MCF 10A (cell line): ENCODE measurements at regions of chr1 and their contacts with region 1.

Region 1: DNA sequence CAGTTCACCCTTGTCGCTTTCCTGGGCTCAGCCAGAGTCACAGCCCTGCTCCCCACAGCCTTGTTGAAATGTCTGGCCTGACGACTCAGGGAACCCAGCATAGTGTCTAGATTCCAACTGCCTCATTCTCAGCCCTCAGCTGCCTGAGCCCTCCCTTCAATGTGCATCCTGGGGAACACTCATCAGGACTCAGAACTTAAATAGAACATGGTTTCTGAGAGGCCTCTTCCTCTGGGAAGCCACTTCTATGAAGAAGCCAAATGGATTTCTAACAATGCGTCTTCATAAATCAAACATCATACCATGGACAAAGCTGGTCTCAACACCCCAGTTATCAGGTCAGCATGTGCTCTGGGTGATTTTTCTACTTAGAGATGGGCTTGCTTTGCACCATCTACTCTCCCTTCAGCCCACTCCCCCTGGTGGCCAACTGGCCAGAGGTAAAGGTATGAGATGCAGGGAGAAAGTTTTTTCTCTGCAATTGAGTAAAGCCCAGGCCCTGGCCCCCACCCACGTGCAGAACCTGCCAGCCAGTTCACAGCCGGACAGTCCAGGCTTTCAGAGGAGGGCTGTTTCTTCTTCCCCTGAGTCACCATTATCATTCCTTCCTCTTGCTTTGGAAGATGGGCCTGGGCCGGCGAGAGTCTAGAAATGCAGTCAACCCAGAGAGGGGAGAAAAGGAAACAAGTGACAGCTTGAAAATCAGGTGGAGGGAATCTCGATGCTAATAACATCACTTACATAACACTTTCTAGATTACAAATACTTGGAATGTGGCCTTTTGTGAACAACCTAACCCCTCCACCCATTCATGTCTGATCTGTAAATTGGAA is 32.1 kb downstream of the CD244 start:
- DNase-seq: peak; percentile 85
- H3K4me3 Mint-ChIP-seq: no peak overlapping the region
- H3K27ac Mint-ChIP-seq: no peak overlapping the region
- H3K4me1 Mint-ChIP-seq: peaks cover 23% of the 10 kb centered on the region
- H3K27me3 Mint-ChIP-seq: no peaks in the 10 kb centered on the region
- CTCF ChIP-seq: peak; percentile 90

Region 2: GRCh38 chr1:160675641-160676410 is 154.7 kb before region 1 on chr1:
- CTCF ChIA-PET with region 1: interaction called, 97 read pairs
- POLR2A ChIA-PET with region 1: no interaction called
- intact Hi-C with region 1: loop called (anchors 1 kb)
- DNase-seq: peak; percentile 74
- H3K4me3 Mint-ChIP-seq: no peak overlapping the region
- H3K27ac Mint-ChIP-seq: no peak overlapping the region
- H3K4me1 Mint-ChIP-seq: no peaks in the 10 kb centered on the region
- H3K27me3 Mint-ChIP-seq: peaks cover 31% of the 10 kb centered on the region
- CTCF ChIP-seq: peak; percentile 90

Region 3: DNA sequence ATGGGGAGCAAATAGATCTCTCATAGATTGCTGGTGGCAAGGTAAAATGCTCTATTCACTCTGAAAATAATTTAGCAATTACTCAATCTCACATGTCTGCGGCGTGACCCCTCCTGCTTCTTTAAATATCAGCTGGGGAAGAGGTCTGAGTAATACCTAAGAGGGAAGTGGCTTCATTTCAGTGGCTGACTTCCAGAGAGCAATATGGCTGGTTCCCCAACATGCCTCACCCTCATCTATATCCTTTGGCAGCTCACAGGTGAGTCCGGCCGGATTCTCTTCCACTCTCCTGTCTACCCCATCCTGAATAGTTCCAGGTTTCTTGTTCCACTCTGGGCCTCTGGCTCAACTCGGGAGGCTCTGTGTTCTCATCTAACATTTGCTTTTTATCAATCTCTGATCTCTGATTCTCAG is 91.4 kb before region 1 on chr1 and contains the start of gene SLAMF7:
- CTCF ChIA-PET with region 1: interaction called, 12 read pairs
- POLR2A ChIA-PET with region 1: interaction called, 3 read pairs
- intact Hi-C with region 1: no loop called
- DNase-seq: peak; percentile 60
- H3K4me3 Mint-ChIP-seq: peak within 1 kb of the TSS; percentile 60
- H3K27ac Mint-ChIP-seq: no peak within 1 kb of the TSS
- H3K4me1 Mint-ChIP-seq: peaks cover 14% of the 10 kb centered on the region
- H3K27me3 Mint-ChIP-seq: no peaks in the 10 kb centered on the region
- CTCF ChIP-seq: no peak
- total RNA-seq, gene SLAMF7: 8.6 and 26.3 TPM in 2 replicates

Region 4: GRCh38 chr1:160777486-160778089 is 52.9 kb before region 1 on chr1:
- CTCF ChIA-PET with region 1: interaction called, 30 read pairs
- POLR2A ChIA-PET with region 1: interaction called, 4 read pairs
- intact Hi-C with region 1: loop called (anchors 1 kb)
- DNase-seq: peak; percentile 71
- H3K4me3 Mint-ChIP-seq: no peak overlapping the region
- H3K27ac Mint-ChIP-seq: no peak overlapping the region
- H3K4me1 Mint-ChIP-seq: no peaks in the 10 kb centered on the region
- H3K27me3 Mint-ChIP-seq: no peaks in the 10 kb centered on the region
- CTCF ChIP-seq: peak; percentile 85

Region 5: DNA sequence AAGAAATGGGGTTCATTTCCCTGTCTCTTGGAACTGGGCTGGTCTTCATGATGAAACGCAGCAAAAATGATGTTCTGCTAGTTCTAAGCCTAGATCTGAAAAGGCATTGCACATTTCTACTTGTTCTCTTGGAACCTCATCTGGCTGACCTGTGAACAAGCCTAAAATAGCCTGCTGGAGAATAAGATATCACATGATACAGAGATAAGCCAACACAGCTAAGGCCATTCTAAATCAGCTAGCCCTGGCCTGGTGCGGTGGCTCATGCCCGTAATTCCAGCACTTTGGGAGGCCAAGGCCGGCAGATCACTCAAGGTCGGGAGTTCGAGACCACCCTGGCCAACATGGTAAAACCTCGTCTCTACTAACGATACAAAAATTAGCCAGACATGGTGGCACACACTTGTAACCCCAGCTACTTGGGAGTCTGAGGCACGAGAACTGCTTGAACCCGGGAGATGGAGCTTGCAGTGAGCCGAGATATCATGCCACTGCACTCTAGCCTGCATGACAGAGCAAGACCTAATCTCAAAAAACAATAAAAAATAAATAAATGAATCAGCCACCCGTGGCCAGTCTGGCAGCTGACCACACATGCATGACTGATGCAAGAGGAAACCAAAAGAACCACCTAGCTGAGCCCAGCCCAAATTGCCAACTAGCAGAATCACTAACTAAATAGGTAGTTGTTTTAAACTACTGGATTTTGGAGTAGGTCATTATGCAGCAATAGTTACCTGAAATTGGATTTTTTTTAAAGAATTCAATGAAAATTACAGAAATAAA is 14.1 kb after region 1 on chr1:
- CTCF ChIA-PET with region 1: interaction called, 27 read pairs
- POLR2A ChIA-PET with region 1: interaction called, 4 read pairs
- intact Hi-C with region 1: no loop called
- DNase-seq: peak; percentile 32
- H3K4me3 Mint-ChIP-seq: no peak overlapping the region
- H3K27ac Mint-ChIP-seq: no peak overlapping the region
- H3K4me1 Mint-ChIP-seq: no peaks in the 10 kb centered on the region
- H3K27me3 Mint-ChIP-seq: peaks cover 17% of the 10 kb centered on the region
- CTCF ChIP-seq: no peak

Region 6: GRCh38 chr1:160997323-160998038 is 166.9 kb after region 1 on chr1:
- CTCF ChIA-PET with region 1: interaction called, 109 read pairs
- POLR2A ChIA-PET with region 1: interaction called, 3 read pairs
- intact Hi-C with region 1: no loop called
- DNase-seq: peak; percentile 74
- H3K4me3 Mint-ChIP-seq: no peak overlapping the region
- H3K27ac Mint-ChIP-seq: no peak overlapping the region
- H3K4me1 Mint-ChIP-seq: peaks cover 35% of the 10 kb centered on the region
- H3K27me3 Mint-ChIP-seq: no peaks in the 10 kb centered on the region
- CTCF ChIP-seq: peak; percentile 44

Region 7: GRCh38 chr1:161159087-161159912 is 328.8 kb after region 1 on chr1 and contains the start of gene USP21:
- CTCF ChIA-PET with region 1: no interaction called
- POLR2A ChIA-PET with region 1: no interaction called
- intact Hi-C with region 1: no loop called
- DNase-seq: peak; percentile 94
- H3K4me3 Mint-ChIP-seq: peak within 1 kb of the TSS; percentile 87
- H3K27ac Mint-ChIP-seq: peak within 1 kb of the TSS; percentile 94
- H3K4me1 Mint-ChIP-seq: peaks cover 45% of the 10 kb centered on the region
- H3K27me3 Mint-ChIP-seq: no peaks in the 10 kb centered on the region
- CTCF ChIP-seq: peak; percentile 55
- total RNA-seq, gene USP21: 33.8 and 36.6 TPM in 2 replicates

Region 8: DNA sequence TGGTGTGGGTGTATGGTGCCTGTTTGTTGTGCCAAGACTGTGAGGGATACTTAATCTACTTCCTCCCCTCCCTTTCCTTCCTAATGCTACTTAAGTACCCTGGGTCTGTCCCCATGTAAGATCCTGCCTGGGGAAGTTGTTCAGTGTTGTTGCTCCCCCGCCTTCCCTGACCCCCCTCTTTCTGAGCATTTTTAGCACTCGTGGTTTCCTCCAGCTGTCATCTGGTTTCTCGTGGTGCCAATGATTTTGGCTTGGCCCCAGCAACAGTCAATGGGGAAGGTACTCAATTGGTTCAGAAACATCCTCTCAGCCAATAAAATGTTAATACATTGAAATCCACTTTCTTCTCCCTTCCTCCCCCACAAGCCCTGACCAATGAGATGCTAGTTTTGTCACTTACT is 354.7 kb after region 1 on chr1:
- CTCF ChIA-PET with region 1: no interaction called
- POLR2A ChIA-PET with region 1: no interaction called
- intact Hi-C with region 1: no loop called
- DNase-seq: peak; percentile 33
- H3K4me3 Mint-ChIP-seq: no peak overlapping the region
- H3K27ac Mint-ChIP-seq: peak overlapping the region; percentile 36
- H3K4me1 Mint-ChIP-seq: peaks cover 33% of the 10 kb centered on the region
- H3K27me3 Mint-ChIP-seq: no peaks in the 10 kb centered on the region
- CTCF ChIP-seq: no peak